IMR-90 (cell line): ENCODE measurements at regions of chr1 and their contacts with region 1.

Region 1: DNA sequence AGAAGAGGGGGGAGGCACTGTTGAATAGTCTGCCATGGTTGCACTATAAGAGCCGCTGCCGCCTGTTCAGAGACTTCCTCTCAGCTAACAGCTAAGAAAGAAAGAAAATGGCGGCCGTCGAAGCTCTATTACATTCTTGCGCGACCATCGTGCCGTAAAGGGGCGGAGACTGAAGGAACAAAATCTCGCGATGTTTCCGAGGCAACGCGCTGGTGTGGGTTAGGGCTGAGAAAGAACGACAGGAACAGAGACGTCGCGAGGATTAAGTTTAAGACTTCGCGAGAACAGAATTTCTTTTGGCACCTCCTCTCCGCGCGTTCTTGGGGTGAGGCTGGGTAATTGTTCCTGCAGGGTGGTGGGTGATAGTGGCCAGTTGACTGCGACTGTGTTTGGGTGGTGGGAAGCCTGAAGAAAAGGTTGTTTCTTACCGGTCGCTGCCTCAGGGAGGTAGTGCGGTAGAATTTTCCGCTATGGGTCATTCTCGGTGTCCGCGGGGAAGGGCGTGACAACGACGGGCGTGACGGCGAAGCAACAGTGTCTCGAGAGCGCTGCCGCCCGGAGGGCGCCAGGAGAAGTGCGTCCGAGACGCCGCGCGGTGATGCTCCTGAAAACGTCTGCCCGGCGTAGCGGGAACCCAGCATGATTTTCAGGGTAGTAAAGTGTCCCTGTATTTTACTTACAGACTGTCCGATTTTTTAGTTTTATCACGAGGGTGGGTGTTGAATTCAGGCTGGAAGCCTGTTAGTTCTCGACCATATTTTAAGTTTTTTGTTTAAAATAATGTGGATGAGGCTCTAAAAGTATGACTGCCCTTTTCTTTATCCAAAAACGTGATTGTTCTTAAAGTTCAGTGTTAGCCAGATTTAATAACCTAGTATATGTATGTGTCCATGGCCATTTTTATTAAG is at the start of gene FUBP1:
- DNase-seq: peak; percentile 99
- ATAC-seq: peak; percentile 86
- H3K4me3 ChIP-seq: peak within 1 kb of the TSS; percentile 62
- H3K27ac ChIP-seq: peak within 1 kb of the TSS; percentile 92
- H3K4me1 ChIP-seq: 0 out of 2 replicates have a peak, but pooled peaks cover 2% of the 10 kb centered on the region
- H3K27me3 ChIP-seq: no peaks in the 10 kb centered on the region
- CTCF ChIP-seq: peak; percentile 65
- POLR2A ChIP-seq: peak; percentile 87
- RAD21 ChIP-seq: peak; percentile 54
- total RNA-seq, gene FUBP1: 129 and 165 TPM in 2 replicates

Region 2: GRCh38 chr1:77489910-77490309 is 489.3 kb before region 1 on chr1:
- CTCF ChIA-PET with region 1: no interaction called
- POLR2A ChIA-PET with region 1: interaction called, 27 read pairs
- dilution Hi-C with region 1: no loop called
- in situ Hi-C with region 1: no loop called
- intact Hi-C with region 1: no loop called
- DNase-seq: peak; percentile 24
- ATAC-seq: no peak; the same call in 1 of the 2 replicates
- H3K4me3 ChIP-seq: no peak overlapping the region
- H3K27ac ChIP-seq: no peak overlapping the region
- H3K4me1 ChIP-seq: peaks cover 6% of the 10 kb centered on the region
- H3K27me3 ChIP-seq: no peaks in the 10 kb centered on the region
- CTCF ChIP-seq: no peak
- POLR2A ChIP-seq: no peak
- RAD21 ChIP-seq: no peak

Region 3: DNA sequence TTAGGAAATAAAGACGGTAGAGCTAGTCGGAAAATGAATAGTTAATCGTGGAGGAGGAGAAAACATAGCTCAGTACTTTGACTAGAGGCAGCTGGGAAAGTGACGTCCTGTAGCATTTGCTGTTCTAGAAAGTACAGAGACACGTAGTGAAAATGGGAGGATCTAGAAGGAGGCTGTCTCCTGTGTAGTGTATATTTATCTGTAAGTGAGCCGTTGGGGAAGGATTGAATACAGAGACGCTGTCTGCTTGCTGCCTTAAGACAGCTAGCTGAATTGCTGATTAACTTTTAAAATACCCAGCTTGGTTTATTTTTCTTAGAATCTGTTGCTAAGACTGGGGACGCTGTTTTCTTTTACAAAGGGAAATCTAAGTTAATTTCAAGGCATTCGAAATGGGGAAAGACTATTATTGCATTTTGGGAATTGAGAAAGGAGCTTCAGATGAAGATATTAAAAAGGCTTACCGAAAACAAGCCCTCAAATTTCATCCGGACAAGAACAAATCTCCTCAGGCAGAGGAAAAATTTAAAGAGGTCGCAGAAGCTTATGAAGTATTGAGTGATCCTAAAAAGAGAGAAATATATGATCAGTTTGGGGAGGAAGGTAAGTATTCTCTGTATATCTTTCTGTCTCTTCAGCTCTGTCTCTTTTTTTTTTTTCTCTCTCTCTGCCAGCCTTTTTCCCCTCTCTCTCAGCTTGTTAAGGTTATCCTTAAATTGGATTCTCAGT is 25.7 kb after region 1 on chr1 and contains the start of gene DNAJB4:
- CTCF ChIA-PET with region 1: interaction called, 4 read pairs
- POLR2A ChIA-PET with region 1: interaction called, 9 read pairs
- dilution Hi-C with region 1: no loop called
- in situ Hi-C with region 1: no loop called
- intact Hi-C with region 1: loop called (anchors 1 kb)
- DNase-seq: peak; percentile 99
- ATAC-seq: peak; percentile 93
- H3K4me3 ChIP-seq: peak within 1 kb of the TSS; percentile 80
- H3K27ac ChIP-seq: peak within 1 kb of the TSS; percentile 85
- H3K4me1 ChIP-seq: peaks cover 4% of the 10 kb centered on the region
- H3K27me3 ChIP-seq: no peaks in the 10 kb centered on the region
- CTCF ChIP-seq: no peak
- POLR2A ChIP-seq: peak; percentile 94
- RAD21 ChIP-seq: peak; percentile 3; the same call in 1 of the 2 replicates
- total RNA-seq, gene DNAJB4: 30.6 and 76.1 TPM in 2 replicates